ENCODE measurements at regions of chr5 and their contacts with region 1.

Region 1: GRCh38 chr5:176573564-176574296 is 24.6 kb downstream of the CDHR2 start:
- DNase-seq: peak; percentile 75
- ATAC-seq: peak; percentile 86
- H3K4me3 Mint-ChIP-seq: no peak overlapping the region
- H3K27ac Mint-ChIP-seq: no peak overlapping the region
- H3K4me1 Mint-ChIP-seq: peaks cover 13% of the 10 kb centered on the region
- H3K27me3 Mint-ChIP-seq: peaks cover 8% of the 10 kb centered on the region
- CTCF ChIP-seq: peak; percentile 34

Region 2: GRCh38 chr5:176415952-176416924 is 157.5 kb before region 1 on chr5 and contains the start of gene CLTB:
- CTCF ChIA-PET with region 1: interaction called, 13 read pairs
- POLR2A ChIA-PET with region 1: no interaction called
- intact Hi-C with region 1: loop called (anchors 1 kb)
- DNase-seq: peak; percentile 80
- ATAC-seq: peak; percentile 97
- H3K4me3 Mint-ChIP-seq: peak within 1 kb of the TSS; percentile 80
- H3K27ac Mint-ChIP-seq: peak within 1 kb of the TSS; percentile 56
- H3K4me1 Mint-ChIP-seq: peaks cover 26% of the 10 kb centered on the region
- H3K27me3 Mint-ChIP-seq: peaks cover 8% of the 10 kb centered on the region
- CTCF ChIP-seq: no peak
- total RNA-seq, gene CLTB: 29.5 and 48.9 TPM in 2 replicates

Region 3: DNA sequence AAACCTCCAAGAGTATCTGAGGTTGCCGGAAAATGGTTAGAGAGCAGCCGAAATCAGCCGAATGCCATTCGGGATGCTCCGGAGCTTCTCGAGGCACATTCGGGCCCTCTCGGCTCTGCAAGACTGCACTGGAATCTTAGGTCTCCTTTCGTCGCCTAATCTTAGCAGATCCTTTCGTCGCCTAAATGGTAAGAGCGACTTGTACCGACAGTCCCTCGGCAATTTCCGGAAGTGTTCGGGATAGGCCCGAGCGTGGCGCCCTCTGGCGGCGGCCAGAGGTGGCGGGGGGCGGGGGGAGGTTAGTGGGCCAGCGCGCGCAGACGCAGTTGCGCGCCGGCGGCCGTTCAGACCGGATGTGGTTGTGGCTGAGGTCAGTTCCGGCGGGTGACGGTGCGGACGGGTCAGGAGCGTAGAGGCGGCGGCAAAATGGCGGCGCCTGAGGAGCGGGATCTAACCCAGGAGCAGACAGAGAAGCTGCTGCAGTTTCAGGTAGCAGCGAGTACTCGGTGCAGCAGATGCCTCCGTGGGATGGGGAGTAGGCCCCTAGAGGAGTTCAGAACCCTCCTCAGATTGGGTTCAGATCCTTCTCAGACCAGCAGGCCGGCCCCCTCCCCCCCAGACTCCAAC is 125.6 kb before region 1 on chr5 and contains the start of gene FAF2:
- CTCF ChIA-PET with region 1: no interaction called
- POLR2A ChIA-PET with region 1: no interaction called
- intact Hi-C with region 1: no loop called
- DNase-seq: peak; percentile 100
- ATAC-seq: peak; percentile 94
- H3K4me3 Mint-ChIP-seq: peak within 1 kb of the TSS; percentile 98
- H3K27ac Mint-ChIP-seq: peak within 1 kb of the TSS; percentile 96
- H3K4me1 Mint-ChIP-seq: peaks cover 32% of the 10 kb centered on the region
- H3K27me3 Mint-ChIP-seq: peaks cover 2% of the 10 kb centered on the region
- CTCF ChIP-seq: peak; percentile 49
- total RNA-seq, gene FAF2: 35.6 and 39.0 TPM in 2 replicates

Region 4: DNA sequence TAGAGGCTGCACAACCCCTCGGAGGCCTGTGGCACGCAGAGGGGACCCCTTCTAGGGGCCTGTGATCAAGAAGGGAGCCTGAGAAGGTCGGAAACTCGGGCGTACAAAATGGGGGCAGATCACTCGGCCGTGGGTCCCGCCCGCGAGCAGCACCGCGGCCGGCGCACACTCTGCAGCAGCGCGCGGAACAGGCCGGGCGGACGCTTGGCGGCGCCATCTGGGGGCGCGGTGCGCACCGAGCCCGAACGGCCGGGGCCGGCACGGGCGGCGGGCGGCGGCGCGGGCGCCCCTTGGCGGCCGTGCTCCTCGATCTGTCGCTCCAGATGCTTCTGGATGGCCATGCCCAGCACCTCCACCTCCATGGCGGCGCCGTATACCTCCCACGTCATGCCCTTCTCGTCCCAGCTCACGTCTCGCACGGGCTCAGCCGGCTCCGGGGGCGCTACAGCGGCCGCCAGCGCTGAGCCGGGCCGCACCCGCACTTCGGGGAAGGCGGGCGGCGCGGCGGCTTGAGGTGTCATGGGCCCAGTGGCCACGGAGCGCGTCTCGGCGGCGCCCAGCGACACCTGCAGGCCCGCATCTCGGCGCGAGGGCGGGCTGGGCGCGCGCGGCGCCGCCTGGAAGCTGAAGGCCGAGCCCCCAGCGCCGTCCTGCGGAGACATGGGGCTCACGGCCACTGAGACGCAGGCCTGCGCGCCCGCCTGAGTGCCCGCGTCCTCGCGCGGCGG is 23.1 kb after region 1 on chr5:
- CTCF ChIA-PET with region 1: no interaction called
- POLR2A ChIA-PET with region 1: no interaction called
- intact Hi-C with region 1: loop called (anchors 2 kb)
- DNase-seq: peak; percentile 44
- ATAC-seq: peak; percentile 80
- H3K4me3 Mint-ChIP-seq: peak overlapping the region; percentile 72
- H3K27ac Mint-ChIP-seq: no peak overlapping the region
- H3K4me1 Mint-ChIP-seq: peaks cover 7% of the 10 kb centered on the region
- H3K27me3 Mint-ChIP-seq: peaks cover 10% of the 10 kb centered on the region
- CTCF ChIP-seq: no peak

Region 5: GRCh38 chr5:176647030-176647866 is 73.5 kb after region 1 on chr5 and contains the start of gene TSPAN17:
- CTCF ChIA-PET with region 1: no interaction called
- POLR2A ChIA-PET with region 1: no interaction called
- intact Hi-C with region 1: loop called (anchors 1 kb)
- DNase-seq: peak; percentile 99
- ATAC-seq: peak; percentile 97
- H3K4me3 Mint-ChIP-seq: peak within 1 kb of the TSS; percentile 90
- H3K27ac Mint-ChIP-seq: peak within 1 kb of the TSS; percentile 91
- H3K4me1 Mint-ChIP-seq: peaks cover 45% of the 10 kb centered on the region
- H3K27me3 Mint-ChIP-seq: no peaks in the 10 kb centered on the region
- CTCF ChIP-seq: no peak
- total RNA-seq, gene TSPAN17: 20.7 and 27.7 TPM in 2 replicates

Region 6: GRCh38 chr5:176784218-176785165 is 210.8 kb after region 1 on chr5:
- CTCF ChIA-PET with region 1: no interaction called
- POLR2A ChIA-PET with region 1: no interaction called
- intact Hi-C with region 1: no loop called
- DNase-seq: no peak
- ATAC-seq: no peak
- H3K4me3 Mint-ChIP-seq: no peak overlapping the region
- H3K27ac Mint-ChIP-seq: no peak overlapping the region
- H3K4me1 Mint-ChIP-seq: no peaks in the 10 kb centered on the region
- H3K27me3 Mint-ChIP-seq: peaks cover 27% of the 10 kb centered on the region
- CTCF ChIP-seq: no peak

Measured in activated B cell treated with CpG ODN at 0.5 μM for 24 hours (primary cell).